MCF 10A (cell line): ENCODE measurements at regions of chr17 and their contacts with region 1.

Region 1: DNA sequence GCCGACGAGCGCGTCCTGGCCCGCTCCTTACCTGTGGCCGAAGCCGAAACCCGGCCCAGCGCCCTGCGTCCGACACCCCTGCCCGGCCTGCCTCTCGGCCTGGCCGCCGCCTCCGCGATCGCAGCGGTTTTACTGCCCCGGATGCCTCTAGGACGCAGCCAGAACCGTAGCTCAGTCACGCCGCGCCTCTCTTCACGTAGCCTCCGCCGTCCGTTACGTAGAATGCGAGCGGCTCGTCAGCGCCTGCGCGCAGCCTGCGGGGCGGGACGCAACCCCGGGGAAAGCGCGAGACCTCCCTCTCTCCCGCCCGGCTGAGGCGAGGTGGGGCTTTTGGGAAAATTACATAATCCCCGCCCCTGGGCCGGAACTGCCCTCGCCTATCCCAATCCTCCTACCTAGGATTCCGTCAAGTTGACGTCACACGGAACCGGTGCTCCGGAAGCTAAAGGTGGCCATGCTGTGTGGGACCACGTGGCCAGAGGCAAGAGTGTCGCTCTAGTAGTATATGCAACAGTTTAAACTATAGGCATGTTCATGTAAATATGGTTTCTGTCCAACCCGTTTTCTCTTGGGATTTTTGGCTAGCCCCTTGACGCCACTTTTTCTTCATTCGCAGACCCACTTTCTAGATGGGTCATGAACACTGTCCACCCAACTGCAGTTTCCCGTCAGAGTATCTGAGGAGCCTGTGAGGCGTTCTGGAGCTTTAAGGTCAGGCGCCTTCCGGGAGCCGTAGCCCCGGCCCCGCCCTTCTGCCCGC is at the start of gene CCDC47:
- DNase-seq: peak; percentile 99
- H3K4me3 Mint-ChIP-seq: peak within 1 kb of the TSS; percentile 76
- H3K27ac Mint-ChIP-seq: peak within 1 kb of the TSS; percentile 100
- H3K4me1 Mint-ChIP-seq: peaks cover 30% of the 10 kb centered on the region
- H3K27me3 Mint-ChIP-seq: no peaks in the 10 kb centered on the region
- CTCF ChIP-seq: no peak
- total RNA-seq, gene CCDC47: 86.4 and 114 TPM in 2 replicates

Region 2: GRCh38 chr17:63741221-63742049 is 32.1 kb before region 1 on chr17 and contains the start of gene STRADA:
- CTCF ChIA-PET with region 1: interaction called, 3 read pairs
- POLR2A ChIA-PET with region 1: interaction called, 96 read pairs
- intact Hi-C with region 1: loop called (anchors 2 kb)
- DNase-seq: peak; percentile 99
- H3K4me3 Mint-ChIP-seq: peak within 1 kb of the TSS; percentile 89
- H3K27ac Mint-ChIP-seq: peak within 1 kb of the TSS; percentile 87
- H3K4me1 Mint-ChIP-seq: no peaks in the 10 kb centered on the region
- H3K27me3 Mint-ChIP-seq: no peaks in the 10 kb centered on the region
- CTCF ChIP-seq: no peak
- total RNA-seq, gene STRADA: 36.5 and 36.6 TPM in 2 replicates

Region 3: DNA sequence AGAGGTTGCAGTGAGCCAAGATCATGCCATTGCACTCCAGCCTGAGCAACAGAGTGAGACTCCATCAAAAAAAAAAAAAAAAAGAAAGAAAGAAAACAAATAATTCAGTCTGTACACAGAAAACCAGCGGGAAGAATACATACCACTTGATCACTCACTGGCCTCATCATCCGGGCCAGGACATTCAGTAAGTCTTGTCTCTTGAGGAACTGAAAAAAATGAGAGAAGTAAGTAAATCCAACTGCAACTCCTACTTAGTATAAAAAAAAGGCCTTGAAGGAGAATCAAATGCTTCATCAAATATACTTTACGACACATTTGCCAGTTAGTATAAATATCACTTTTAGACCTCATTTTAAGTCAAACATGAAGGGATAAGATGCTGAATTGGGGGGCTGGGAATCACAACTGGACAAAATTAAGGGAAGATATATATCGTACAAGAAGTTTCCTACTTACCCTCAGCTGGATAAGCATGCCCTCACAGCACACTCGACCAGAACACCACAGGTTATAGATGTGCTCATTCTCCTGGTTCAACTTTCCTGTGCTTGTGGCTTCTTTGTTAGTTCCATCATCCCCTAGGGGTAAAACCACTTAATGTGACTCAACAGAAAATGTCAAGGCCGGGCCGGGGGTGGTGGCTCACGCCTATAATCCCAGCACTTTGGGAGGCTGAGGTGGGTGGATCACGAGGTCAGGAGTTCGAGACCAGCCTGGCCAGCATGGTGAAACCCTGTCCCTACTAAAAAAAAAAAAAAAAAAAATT is 12.6 kb before region 1 on chr17:
- CTCF ChIA-PET with region 1: no interaction called
- POLR2A ChIA-PET with region 1: interaction called, 21 read pairs
- intact Hi-C with region 1: no loop called
- DNase-seq: no peak
- H3K4me3 Mint-ChIP-seq: no peak overlapping the region
- H3K27ac Mint-ChIP-seq: no peak overlapping the region
- H3K4me1 Mint-ChIP-seq: peaks cover 4% of the 10 kb centered on the region
- H3K27me3 Mint-ChIP-seq: no peaks in the 10 kb centered on the region
- CTCF ChIP-seq: no peak

Region 4: GRCh38 chr17:63798572-63799106 is 25.1 kb after region 1 on chr17:
- CTCF ChIA-PET with region 1: interaction called, 3 read pairs
- POLR2A ChIA-PET with region 1: interaction called, 211 read pairs
- intact Hi-C with region 1: no loop called
- DNase-seq: no peak
- H3K4me3 Mint-ChIP-seq: no peak overlapping the region
- H3K27ac Mint-ChIP-seq: no peak overlapping the region
- H3K4me1 Mint-ChIP-seq: no peaks in the 10 kb centered on the region
- H3K27me3 Mint-ChIP-seq: no peaks in the 10 kb centered on the region
- CTCF ChIP-seq: no peak

Region 5: DNA sequence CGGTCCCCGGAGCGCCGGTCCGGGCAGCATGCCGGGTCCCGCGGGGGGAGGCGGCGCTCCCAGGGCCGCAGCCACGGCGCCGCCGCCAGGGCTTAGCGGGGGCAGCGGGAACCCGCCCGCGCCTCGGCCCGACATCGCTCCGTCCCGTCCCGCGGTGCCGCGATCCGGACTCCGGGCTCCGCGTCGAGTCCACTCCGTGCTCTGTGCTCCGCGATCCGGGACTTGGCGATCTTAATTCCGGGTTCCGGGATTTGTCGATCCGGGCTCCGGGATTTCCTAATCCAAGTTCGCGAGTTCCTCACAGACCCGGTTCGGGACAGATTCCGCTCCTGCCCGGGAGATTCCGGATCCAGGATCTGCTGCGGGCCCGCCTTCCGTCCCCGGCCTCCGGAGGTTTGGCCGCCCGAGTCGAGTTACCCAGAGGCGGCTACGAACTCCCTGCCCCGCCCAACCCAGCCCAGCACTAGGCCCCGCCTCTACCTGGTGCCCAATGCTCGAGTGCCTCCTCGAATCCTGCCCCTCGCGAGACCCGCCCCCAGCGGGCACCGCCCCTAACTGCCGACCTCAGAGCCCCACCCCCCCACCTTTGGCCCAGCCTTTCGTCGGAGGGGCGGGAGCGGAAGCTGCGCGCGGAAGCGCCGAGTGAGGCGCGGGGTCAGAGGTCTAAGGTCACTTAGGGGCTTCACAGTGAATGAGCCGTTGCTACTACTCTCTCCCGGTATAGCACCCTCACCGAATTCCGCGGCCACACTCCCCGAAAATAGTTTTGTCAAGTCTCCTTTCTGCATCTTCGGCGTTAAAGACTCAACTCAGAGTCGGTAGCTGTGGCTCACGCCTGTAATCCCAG is 69.2 kb after region 1 on chr17 and contains the start of gene SMARCD2:
- CTCF ChIA-PET with region 1: no interaction called
- POLR2A ChIA-PET with region 1: interaction called, 77 read pairs
- intact Hi-C with region 1: no loop called
- DNase-seq: peak; percentile 98
- H3K4me3 Mint-ChIP-seq: peak within 1 kb of the TSS; percentile 93
- H3K27ac Mint-ChIP-seq: peak within 1 kb of the TSS; percentile 90
- H3K4me1 Mint-ChIP-seq: peaks cover 36% of the 10 kb centered on the region
- H3K27me3 Mint-ChIP-seq: no peaks in the 10 kb centered on the region
- CTCF ChIP-seq: no peak
- total RNA-seq, gene SMARCD2: 43.7 and 54.6 TPM in 2 replicates

Region 6: GRCh38 chr17:64016231-64016784 is 242.7 kb after region 1 on chr17:
- CTCF ChIA-PET with region 1: no interaction called
- POLR2A ChIA-PET with region 1: no interaction called
- intact Hi-C with region 1: no loop called
- DNase-seq: no peak
- H3K4me3 Mint-ChIP-seq: no peak overlapping the region
- H3K27ac Mint-ChIP-seq: no peak overlapping the region
- H3K4me1 Mint-ChIP-seq: no peaks in the 10 kb centered on the region
- H3K27me3 Mint-ChIP-seq: peaks cover 12% of the 10 kb centered on the region
- CTCF ChIP-seq: no peak